ENCODE measurements at regions of chr19 and their contacts with region 1.

Region 1: GRCh38 chr19:16382775-16383543 is 58.3 kb downstream of the KLF2 start:
- DNase-seq: peak; percentile 66 to 88 (median 76)
- ATAC-seq: peak; percentile 78
- H3K4me3 Mint-ChIP-seq: peak overlapping the region; percentile 43 to 84 (median 72)
- H3K27ac Mint-ChIP-seq: peak overlapping the region in 8 of 10 donors; percentile 90 to 98 (median 98)
- H3K4me1 Mint-ChIP-seq: peaks cover 35 to 61% (median 53%) of the 10 kb centered on the region in 4 donors
- H3K27me3 Mint-ChIP-seq: no peaks in the 10 kb centered on the region

Region 2: DNA sequence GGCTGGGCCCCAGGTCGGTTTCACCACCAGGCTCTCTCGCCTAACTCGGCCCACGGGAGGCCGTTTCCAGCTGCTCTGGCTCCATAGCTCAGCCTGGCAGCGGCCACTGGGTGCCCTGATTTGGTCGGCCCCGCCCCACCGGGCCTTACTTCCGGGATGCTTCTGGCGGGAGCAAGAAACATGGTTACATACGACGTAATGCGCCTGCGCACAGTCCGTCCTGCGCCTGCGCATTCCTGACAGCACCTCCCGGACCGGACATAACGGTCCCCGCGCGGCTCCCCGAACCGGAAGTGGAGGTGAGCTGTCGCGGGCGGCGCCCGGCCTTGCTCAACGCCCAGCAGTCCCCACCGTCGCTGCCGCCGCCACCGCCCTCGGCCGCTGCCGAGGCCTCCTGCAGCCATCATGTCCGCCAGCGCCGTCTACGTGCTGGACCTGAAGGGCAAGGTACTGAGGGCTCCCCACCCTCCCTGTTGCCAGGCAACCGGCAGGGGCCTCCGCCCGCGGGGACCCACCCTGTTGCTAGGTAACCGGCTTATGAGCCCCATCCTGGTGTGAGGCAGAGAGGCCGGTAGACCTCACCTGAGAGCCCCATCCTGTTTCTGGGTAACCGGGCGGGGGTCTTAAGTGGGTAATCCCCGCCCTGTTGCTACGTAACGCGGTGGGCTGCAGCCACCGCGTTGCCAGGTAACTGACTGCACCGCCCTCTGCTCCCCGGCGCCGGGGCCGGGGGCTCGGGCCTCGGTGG is 185.2 kb before region 1 on chr19 and contains the start of gene AP1M1:
- POLR2A ChIA-PET with region 1: interaction called, 13 read pairs
- DNase-seq: peak; percentile 94 to 99 (median 97)
- ATAC-seq: peak; percentile 78 to 83
- H3K4me3 Mint-ChIP-seq: peak within 1 kb of the TSS; percentile 75 to 95 (median 90)
- H3K27ac Mint-ChIP-seq: peak within 1 kb of the TSS; percentile 94 to 99 (median 98)
- H3K4me1 Mint-ChIP-seq: peaks cover 32 to 59% (median 48%) of the 10 kb centered on the region in 4 donors
- H3K27me3 Mint-ChIP-seq: no peaks in the 10 kb centered on the region
- polyA plus RNA-seq, gene AP1M1: 195 to 288 (median 241) TPM

Region 3: DNA sequence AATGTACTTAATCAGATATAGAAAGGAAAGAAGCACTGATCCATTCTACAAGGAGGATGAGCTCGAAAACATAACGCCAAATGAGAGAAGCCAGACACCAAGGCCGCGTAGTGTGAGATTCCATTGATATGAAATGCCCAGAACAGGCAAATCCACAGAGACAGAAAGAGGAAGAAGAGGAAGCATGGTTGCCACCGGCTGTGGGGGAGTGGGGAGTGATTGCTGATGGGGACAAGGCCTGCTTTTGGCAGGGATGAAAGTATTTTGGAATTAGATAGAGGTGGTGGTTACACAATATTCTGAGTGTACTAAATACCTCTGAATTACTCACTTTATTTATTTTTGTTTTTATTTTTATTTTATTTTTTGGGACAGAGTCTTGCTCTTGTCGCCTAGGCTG is 108.5 kb before region 1 on chr19:
- POLR2A ChIA-PET with region 1: no interaction called
- DNase-seq: no peak
- ATAC-seq: no peak
- H3K4me3 Mint-ChIP-seq: no peak overlapping the region
- H3K27ac Mint-ChIP-seq: no peak overlapping the region
- H3K4me1 Mint-ChIP-seq: peaks cover 0 to 9% (median 4%) of the 10 kb centered on the region in 4 donors
- H3K27me3 Mint-ChIP-seq: no peaks in the 10 kb centered on the region

Region 4: DNA sequence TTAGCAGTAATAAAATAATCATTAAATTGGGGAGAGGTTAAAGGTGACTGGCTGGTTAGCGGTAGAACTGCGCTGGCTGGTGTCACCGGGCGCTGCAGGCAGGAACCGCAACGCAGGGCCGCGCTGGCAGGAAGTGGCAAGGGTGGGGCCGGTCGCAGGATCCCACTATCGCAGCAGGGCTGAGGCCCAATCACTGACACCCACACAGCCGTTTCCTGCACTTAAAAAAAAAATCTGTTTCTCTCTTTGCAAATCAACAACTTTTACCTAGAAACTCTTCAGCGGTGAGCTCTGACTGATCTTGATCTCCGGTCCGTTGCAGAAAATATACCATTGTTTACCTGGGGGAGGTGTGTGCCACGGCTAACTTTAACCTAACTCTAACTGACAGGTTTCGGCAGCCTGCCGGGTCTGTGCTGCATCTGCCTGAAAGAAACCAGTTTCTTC is 11.4 kb before region 1 on chr19:
- POLR2A ChIA-PET with region 1: interaction called, 901 read pairs
- DNase-seq: peak; percentile 77 to 97 (median 94)
- ATAC-seq: peak; percentile 41 to 59
- H3K4me3 Mint-ChIP-seq: no peak overlapping the region
- H3K27ac Mint-ChIP-seq: no peak overlapping the region
- H3K4me1 Mint-ChIP-seq: peaks cover 0 to 54% (median 20%) of the 10 kb centered on the region in 4 donors
- H3K27me3 Mint-ChIP-seq: peaks cover 0 to 2% (median 0%) of the 10 kb centered on the region in 5 donors

Measured in naive thymus-derived CD8-positive, alpha-beta T cell (primary cell).